ENCODE measurements at regions of chr17 and their contacts with region 1.

Region 1: GRCh38 chr17:56715613-56716357 is 117.9 kb downstream of the C17orf67 start:
- DNase-seq: peak; percentile 52 to 64 (median 60)
- H3K4me3 ChIP-seq: no peak overlapping the region
- H3K4me3 Mint-ChIP-seq: no peak overlapping the region
- H3K27ac ChIP-seq: no peak overlapping the region
- H3K27ac Mint-ChIP-seq: no peak overlapping the region
- H3K4me1 ChIP-seq: no peaks in the 10 kb centered on the region
- H3K4me1 Mint-ChIP-seq: peaks cover 0 to 5% (median 3%) of the 10 kb centered on the region in 4 donors
- H3K27me3 ChIP-seq: no peaks in the 10 kb centered on the region
- H3K27me3 Mint-ChIP-seq: peaks cover 2 to 4% of the 10 kb centered on the region in 2 donors

Region 2: GRCh38 chr17:56125830-56126819 is 589.7 kb before region 1 on chr17:
- CTCF ChIA-PET with region 1: interaction called, 4 read pairs
- POLR2A ChIA-PET with region 1: no interaction called
- intact Hi-C with region 1: loop called (anchors 5 kb)
- DNase-seq: no peak
- H3K4me3 ChIP-seq: no peak overlapping the region
- H3K4me3 Mint-ChIP-seq: no peak overlapping the region
- H3K27ac ChIP-seq: no peak overlapping the region
- H3K27ac Mint-ChIP-seq: no peak overlapping the region
- H3K4me1 ChIP-seq: no peaks in the 10 kb centered on the region
- H3K4me1 Mint-ChIP-seq: no peaks in the 10 kb centered on the region
- H3K27me3 ChIP-seq: no peaks in the 10 kb centered on the region
- H3K27me3 Mint-ChIP-seq: peaks cover 0 to 10% of the 10 kb centered on the region in 2 donors

Region 3: GRCh38 chr17:56592487-56593085 is 123.2 kb before region 1 on chr17:
- CTCF ChIA-PET with region 1: interaction called, 69 read pairs
- POLR2A ChIA-PET with region 1: interaction called, 5 read pairs
- intact Hi-C with region 1: loop called (anchors 1 kb)
- DNase-seq: peak; percentile 50 to 61 (median 56)
- H3K4me3 ChIP-seq: peak overlapping the region; percentile 26 to 36
- H3K4me3 Mint-ChIP-seq: peak overlapping the region; percentile 73 to 89 (median 79)
- H3K27ac ChIP-seq: no peak overlapping the region
- H3K27ac Mint-ChIP-seq: peak overlapping the region in 1 of 7 donors; percentile 41
- H3K4me1 ChIP-seq: peaks cover 36% of the 10 kb centered on the region
- H3K4me1 Mint-ChIP-seq: peaks cover 11 to 41% (median 18%) of the 10 kb centered on the region in 4 donors
- H3K27me3 ChIP-seq: peaks cover 13% of the 10 kb centered on the region
- H3K27me3 Mint-ChIP-seq: peaks cover 28 to 46% of the 10 kb centered on the region in 2 donors

Region 4: GRCh38 chr17:56690486-56691291 is 25.1 kb before region 1 on chr17:
- CTCF ChIA-PET with region 1: interaction called, 12 read pairs
- POLR2A ChIA-PET with region 1: no interaction called
- intact Hi-C with region 1: no loop called
- DNase-seq: no peak
- H3K4me3 ChIP-seq: no peak overlapping the region
- H3K4me3 Mint-ChIP-seq: no peak overlapping the region
- H3K27ac ChIP-seq: no peak overlapping the region
- H3K27ac Mint-ChIP-seq: no peak overlapping the region
- H3K4me1 ChIP-seq: no peaks in the 10 kb centered on the region
- H3K4me1 Mint-ChIP-seq: no peaks in the 10 kb centered on the region
- H3K27me3 ChIP-seq: no peaks in the 10 kb centered on the region
- H3K27me3 Mint-ChIP-seq: peaks cover 9 to 15% of the 10 kb centered on the region in 2 donors

Region 5: DNA sequence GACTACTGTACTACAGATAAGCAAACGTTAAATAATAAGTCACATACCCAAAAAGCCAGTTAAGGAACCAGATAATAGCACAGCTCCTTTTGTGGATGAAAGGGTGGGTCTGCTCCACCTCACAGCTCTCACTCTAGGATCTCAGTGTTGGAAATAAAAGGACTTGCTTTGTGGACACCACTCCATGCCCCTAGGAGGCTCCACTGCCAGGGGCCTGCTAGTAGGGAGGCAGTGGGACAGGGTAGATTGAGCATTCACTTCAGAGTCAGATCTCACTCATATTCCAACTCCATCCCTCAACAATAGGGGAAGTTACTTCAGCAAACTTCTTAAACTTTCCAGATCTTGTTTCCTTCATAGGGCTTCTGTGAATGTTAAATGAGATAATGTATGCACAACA is 11.4 kb after region 1 on chr17:
- CTCF ChIA-PET with region 1: interaction called, 10 read pairs
- POLR2A ChIA-PET with region 1: no interaction called
- intact Hi-C with region 1: no loop called
- DNase-seq: no peak
- H3K4me3 ChIP-seq: no peak overlapping the region
- H3K4me3 Mint-ChIP-seq: no peak overlapping the region
- H3K27ac ChIP-seq: no peak overlapping the region
- H3K27ac Mint-ChIP-seq: no peak overlapping the region
- H3K4me1 ChIP-seq: no peaks in the 10 kb centered on the region
- H3K4me1 Mint-ChIP-seq: no peaks in the 10 kb centered on the region
- H3K27me3 ChIP-seq: no peaks in the 10 kb centered on the region
- H3K27me3 Mint-ChIP-seq: peaks cover 8 to 17% of the 10 kb centered on the region in 2 donors

Region 6: GRCh38 chr17:56779898-56780733 is 64.3 kb after region 1 on chr17:
- CTCF ChIA-PET with region 1: interaction called, 52 read pairs
- POLR2A ChIA-PET with region 1: interaction called, 6 read pairs
- intact Hi-C with region 1: loop called (anchors 1 kb)
- DNase-seq: peak; percentile 80 to 87 (median 84)
- H3K4me3 ChIP-seq: peak overlapping the region in 1 of 2 donors; percentile 58
- H3K4me3 Mint-ChIP-seq: peak overlapping the region; percentile 88 to 100 (median 92)
- H3K27ac ChIP-seq: peak overlapping the region; percentile 56
- H3K27ac Mint-ChIP-seq: peak overlapping the region; percentile 94 to 99 (median 95)
- H3K4me1 ChIP-seq: peaks cover 16% of the 10 kb centered on the region
- H3K4me1 Mint-ChIP-seq: peaks cover 11 to 26% (median 18%) of the 10 kb centered on the region in 4 donors
- H3K27me3 ChIP-seq: no peaks in the 10 kb centered on the region
- H3K27me3 Mint-ChIP-seq: no peaks in the 10 kb centered on the region

Region 7: DNA sequence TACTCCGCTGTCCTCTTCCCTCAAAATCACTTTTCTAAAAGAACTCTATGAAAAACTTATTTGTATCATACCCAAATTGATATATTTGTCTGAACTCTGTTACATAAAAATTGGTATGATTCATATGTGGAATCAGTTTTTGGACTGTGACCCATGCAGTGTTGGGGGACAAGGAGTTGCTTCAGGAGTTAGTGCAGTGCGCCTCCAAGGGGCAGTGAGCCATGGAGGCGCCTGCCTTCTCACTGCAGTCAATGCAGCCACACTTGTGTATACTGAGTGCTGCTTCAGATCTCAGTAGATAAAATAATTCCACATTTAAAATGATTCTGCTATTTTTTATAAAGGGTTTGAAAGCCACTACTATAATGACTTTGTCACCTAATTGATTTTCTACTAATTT is 150.7 kb after region 1 on chr17:
- CTCF ChIA-PET with region 1: no interaction called
- POLR2A ChIA-PET with region 1: no interaction called
- intact Hi-C with region 1: no loop called
- DNase-seq: no peak
- H3K4me3 ChIP-seq: no peak overlapping the region
- H3K4me3 Mint-ChIP-seq: no peak overlapping the region
- H3K27ac ChIP-seq: no peak overlapping the region
- H3K27ac Mint-ChIP-seq: no peak overlapping the region
- H3K4me1 ChIP-seq: no peaks in the 10 kb centered on the region
- H3K4me1 Mint-ChIP-seq: peaks cover 0 to 3% (median under 1%) of the 10 kb centered on the region in 4 donors
- H3K27me3 ChIP-seq: no peaks in the 10 kb centered on the region
- H3K27me3 Mint-ChIP-seq: no peaks in the 10 kb centered on the region

Measured in CD4-positive, alpha-beta memory T cell (primary cell).